CD8-positive, alpha-beta memory T cell (primary cell): ENCODE measurements at regions of chr14 and their contacts with region 1.

Region 1: GRCh38 chr14:34043627-34044372 is 92.9 kb upstream of the EGLN3 start:
- DNase-seq: peak; percentile 8 to 69 (median 40)
- H3K4me3 ChIP-seq: no peak overlapping the region
- H3K4me3 Mint-ChIP-seq: peak overlapping the region in 6 of 7 donors; percentile 22 to 73 (median 55)
- H3K27ac ChIP-seq: peak overlapping the region; percentile 56
- H3K27ac Mint-ChIP-seq: peak overlapping the region in 7 of 8 donors; percentile 15 to 73 (median 58)
- H3K4me1 ChIP-seq: peaks cover 37% of the 10 kb centered on the region
- H3K4me1 Mint-ChIP-seq: peaks cover 31 to 64% (median 36%) of the 10 kb centered on the region in 3 donors
- H3K27me3 ChIP-seq: no peaks in the 10 kb centered on the region
- H3K27me3 Mint-ChIP-seq: peaks cover 0 to 3% of the 10 kb centered on the region in 2 donors

Region 2: DNA sequence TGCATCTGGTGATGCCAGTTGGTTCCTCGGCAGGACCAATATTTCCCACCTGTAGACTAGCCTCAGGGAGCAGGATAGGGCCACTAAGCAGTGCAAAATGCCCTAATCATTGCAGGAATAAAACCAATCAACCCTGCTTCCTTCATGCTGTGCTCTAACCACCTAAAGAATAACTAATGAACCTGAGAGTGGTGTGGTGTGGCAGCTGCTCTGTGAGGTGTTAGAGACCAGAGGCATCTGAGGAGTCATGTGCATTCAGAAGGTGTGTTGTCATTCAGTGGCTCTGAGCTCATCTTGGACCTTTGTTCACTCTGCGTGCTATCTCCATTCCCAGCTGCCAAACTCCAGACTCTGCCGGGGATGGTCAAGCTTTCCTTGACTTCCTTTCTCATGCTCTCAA is 43.8 kb after region 1 on chr14:
- CTCF ChIA-PET with region 1: no interaction called
- POLR2A ChIA-PET with region 1: interaction called, 10 read pairs
- DNase-seq: no peak
- H3K4me3 ChIP-seq: no peak overlapping the region
- H3K4me3 Mint-ChIP-seq: no peak overlapping the region
- H3K27ac ChIP-seq: no peak overlapping the region
- H3K27ac Mint-ChIP-seq: no peak overlapping the region
- H3K4me1 ChIP-seq: no peaks in the 10 kb centered on the region
- H3K4me1 Mint-ChIP-seq: no peaks in the 10 kb centered on the region
- H3K27me3 ChIP-seq: no peaks in the 10 kb centered on the region
- H3K27me3 Mint-ChIP-seq: no peaks in the 10 kb centered on the region

Region 3: DNA sequence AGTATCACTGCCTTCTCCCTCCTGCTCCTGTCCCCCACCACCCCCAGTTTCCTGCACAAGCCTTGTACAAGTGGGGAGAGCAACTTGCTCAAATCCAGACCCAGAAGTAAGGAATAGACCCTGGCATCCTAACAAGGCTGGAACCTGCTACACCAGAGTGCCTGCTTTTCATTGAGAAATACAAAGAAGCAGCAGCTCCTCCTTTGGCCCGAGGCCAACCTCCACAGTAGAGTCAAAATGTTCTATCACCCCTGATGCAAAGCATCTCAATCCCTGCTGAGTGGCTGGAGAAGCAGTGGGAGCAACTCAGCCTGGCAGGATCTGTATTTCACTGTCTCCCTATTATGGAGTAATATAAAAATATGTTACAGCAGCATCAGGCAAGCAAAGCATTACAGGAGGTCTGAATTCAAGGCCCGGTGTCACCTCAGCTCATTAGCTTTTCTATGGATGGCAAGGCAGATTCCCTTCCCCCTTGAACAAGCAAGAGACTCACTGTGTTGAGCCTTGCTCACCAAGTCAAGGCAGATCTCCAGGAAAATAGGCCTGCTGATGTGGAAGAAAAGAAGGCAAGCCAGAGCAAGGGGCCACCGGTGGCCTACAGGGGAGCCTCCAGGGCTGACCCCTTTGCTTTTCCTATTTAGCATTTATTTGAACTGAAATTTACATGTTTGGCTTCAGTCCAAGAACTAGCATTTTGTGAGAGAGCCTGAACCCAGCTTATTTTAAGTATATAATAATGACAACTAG is 93.4 kb after region 1 on chr14:
- CTCF ChIA-PET with region 1: no interaction called
- POLR2A ChIA-PET with region 1: no interaction called
- DNase-seq: no peak
- H3K4me3 ChIP-seq: no peak overlapping the region
- H3K4me3 Mint-ChIP-seq: no peak overlapping the region
- H3K27ac ChIP-seq: no peak overlapping the region
- H3K27ac Mint-ChIP-seq: no peak overlapping the region
- H3K4me1 ChIP-seq: no peaks in the 10 kb centered on the region
- H3K4me1 Mint-ChIP-seq: no peaks in the 10 kb centered on the region
- H3K27me3 ChIP-seq: no peaks in the 10 kb centered on the region
- H3K27me3 Mint-ChIP-seq: peaks cover 0 to 1% of the 10 kb centered on the region in 2 donors